H1 (cell line): ENCODE measurements at regions of chr15 and their contacts with region 1.

Region 1: DNA sequence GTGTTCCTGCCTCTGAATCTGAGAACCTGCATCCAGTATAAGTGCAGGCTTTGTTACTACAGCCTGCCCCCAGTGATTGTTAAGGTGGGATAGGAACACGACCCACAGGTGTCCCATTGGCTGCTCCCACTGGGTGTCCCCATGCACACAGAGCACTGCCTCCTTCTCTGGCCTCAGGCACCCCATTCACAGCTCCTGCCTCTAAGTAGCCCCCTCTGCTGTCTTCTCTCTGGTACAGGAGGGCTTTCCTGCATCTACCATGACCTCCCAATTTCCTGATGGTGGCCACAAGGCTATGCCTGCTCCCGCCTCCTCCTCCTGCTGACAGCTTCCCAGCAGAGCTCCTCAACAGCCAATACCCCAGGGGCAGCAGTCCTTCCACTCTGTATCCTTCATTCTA is 238.6 kb upstream of the TMC3 start:
- DNase-seq: peak; percentile 17 to 53
- H3K4me3 ChIP-seq: no peak overlapping the region
- H3K27ac ChIP-seq: no peak overlapping the region
- H3K4me1 ChIP-seq: peaks cover 0 to 4% (median 0%) of the 10 kb centered on the region in 4 experiments; a peak in 1 of 7 replicates
- H3K27me3 ChIP-seq: no peaks in the 10 kb centered on the region; a peak in 1 of 7 replicates
- CTCF ChIP-seq: peak; percentile 50 to 71 (median 51)
- EP300 ChIP-seq: no peak
- POLR2A ChIP-seq: no peak
- RAD21 ChIP-seq: peak; percentile 51 to 64

Region 2: GRCh38 chr15:81596159-81596865 is 16.3 kb before region 1 on chr15:
- CTCF ChIA-PET with region 1: interaction called, 14 read pairs
- POLR2A ChIA-PET with region 1: no interaction called
- DNase-seq: no peak
- H3K4me3 ChIP-seq: no peak overlapping the region
- H3K27ac ChIP-seq: no peak overlapping the region
- H3K4me1 ChIP-seq: no peaks in the 10 kb centered on the region
- H3K27me3 ChIP-seq: no peaks in the 10 kb centered on the region
- CTCF ChIP-seq: no peak
- EP300 ChIP-seq: no peak
- POLR2A ChIP-seq: no peak
- RAD21 ChIP-seq: no peak

Region 3: GRCh38 chr15:81625896-81626295 is 13.3 kb after region 1 on chr15:
- CTCF ChIA-PET with region 1: interaction called, 10 read pairs
- POLR2A ChIA-PET with region 1: no interaction called
- DNase-seq: no peak
- H3K4me3 ChIP-seq: no peak overlapping the region
- H3K27ac ChIP-seq: no peak overlapping the region
- H3K4me1 ChIP-seq: no peaks in the 10 kb centered on the region
- H3K27me3 ChIP-seq: no peaks in the 10 kb centered on the region
- CTCF ChIP-seq: no peak
- EP300 ChIP-seq: no peak
- POLR2A ChIP-seq: no peak
- RAD21 ChIP-seq: no peak